GM12878 (cell line): ENCODE measurements at regions of chr18 and their contacts with region 1.

Region 1: GRCh38 chr18:34122724-34123334 is 101.9 kb downstream of the NOL4 start:
- DNase-seq: peak; percentile 17
- ATAC-seq: peak; percentile 81
- H3K4me3 ChIP-seq: no peak overlapping the region
- H3K27ac ChIP-seq: no peak overlapping the region
- H3K4me1 ChIP-seq: no peaks in the 10 kb centered on the region
- H3K27me3 ChIP-seq: no peaks in the 10 kb centered on the region
- CTCF ChIP-seq: peak; percentile 80 to 99 (median 91); a peak in 5 of 6 replicates
- EP300 ChIP-seq: no peak
- POLR2A ChIP-seq: no peak
- RAD21 ChIP-seq: peak; percentile 98

Region 2: DNA sequence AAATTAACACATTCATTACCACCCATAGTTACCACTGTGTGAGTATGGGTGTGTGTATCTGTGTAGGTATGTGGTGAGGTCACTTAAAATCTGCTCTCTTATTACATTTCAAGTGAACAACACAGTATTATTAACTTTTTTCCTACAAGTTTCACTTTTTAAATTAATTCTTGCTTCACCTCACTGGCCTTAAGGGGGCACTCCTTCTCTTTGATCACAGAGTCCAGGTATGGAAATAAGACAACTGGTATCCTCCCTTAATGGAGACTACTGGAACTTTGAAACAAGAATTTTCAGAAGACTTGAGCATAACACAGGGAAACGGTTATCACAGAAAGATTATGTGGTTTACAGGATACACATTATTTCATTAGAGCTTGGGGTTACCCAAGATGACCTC is 289.0 kb before region 1 on chr18:
- CTCF ChIA-PET with region 1: interaction called, 79 read pairs
- POLR2A ChIA-PET with region 1: no interaction called
- RAD21 ChIA-PET with region 1: interaction called, 74 read pairs
- SMC1A ChIA-PET with region 1: interaction called, 83 read pairs
- in situ Hi-C with region 1: no loop called
- intact Hi-C with region 1: loop called (anchors 2 kb)
- DNase-seq: no peak
- ATAC-seq: peak; percentile 68
- H3K4me3 ChIP-seq: no peak overlapping the region
- H3K27ac ChIP-seq: no peak overlapping the region
- H3K4me1 ChIP-seq: no peaks in the 10 kb centered on the region
- H3K27me3 ChIP-seq: no peaks in the 10 kb centered on the region
- CTCF ChIP-seq: no peak; a peak in 1 of 6 replicates
- EP300 ChIP-seq: no peak
- POLR2A ChIP-seq: no peak
- RAD21 ChIP-seq: peak; percentile 41

Region 3: DNA sequence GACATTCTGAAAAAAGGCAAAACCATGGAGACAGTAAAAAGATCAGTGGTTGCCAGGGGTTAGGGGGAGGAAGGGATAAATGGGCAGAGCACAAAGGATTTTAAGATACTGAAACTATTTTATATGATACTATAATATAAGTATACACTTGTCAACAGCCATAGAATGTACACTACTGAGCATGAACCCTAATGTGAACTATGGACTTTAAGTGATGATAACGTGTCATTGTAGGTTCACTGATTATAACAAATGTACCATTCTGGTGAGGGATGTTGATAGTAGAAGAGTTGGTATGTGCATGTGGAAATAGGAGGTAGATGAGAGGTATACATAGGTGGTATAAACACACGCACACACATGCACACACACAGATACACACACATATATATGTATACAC is 139.7 kb before region 1 on chr18:
- CTCF ChIA-PET with region 1: no interaction called
- POLR2A ChIA-PET with region 1: no interaction called
- RAD21 ChIA-PET with region 1: no interaction called
- SMC1A ChIA-PET with region 1: no interaction called
- in situ Hi-C with region 1: no loop called
- intact Hi-C with region 1: no loop called
- DNase-seq: no peak
- ATAC-seq: no peak
- H3K4me3 ChIP-seq: no peak overlapping the region
- H3K27ac ChIP-seq: no peak overlapping the region
- H3K4me1 ChIP-seq: no peaks in the 10 kb centered on the region
- H3K27me3 ChIP-seq: no peaks in the 10 kb centered on the region
- CTCF ChIP-seq: no peak
- EP300 ChIP-seq: no peak
- POLR2A ChIP-seq: no peak
- RAD21 ChIP-seq: no peak

Region 4: DNA sequence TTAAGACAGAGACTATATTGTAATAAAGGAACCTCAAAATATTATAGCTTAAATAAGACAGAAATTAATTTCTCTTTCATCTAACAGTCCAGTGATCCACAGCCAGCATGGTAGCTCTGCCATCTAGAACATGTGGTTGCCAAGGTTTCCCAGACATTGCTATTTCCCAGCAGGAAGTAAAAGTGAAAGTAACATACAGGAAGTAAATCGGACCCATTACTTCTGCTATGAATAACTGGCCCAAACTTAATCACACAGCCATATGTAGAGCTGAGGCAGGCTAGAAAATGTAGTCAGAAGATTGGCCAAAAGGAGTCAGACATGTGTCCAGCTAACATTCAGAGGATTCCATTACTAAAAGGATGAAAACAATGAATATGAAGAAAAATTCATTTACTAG is 30.9 kb after region 1 on chr18:
- CTCF ChIA-PET with region 1: interaction called, 43 read pairs
- POLR2A ChIA-PET with region 1: interaction called, 6 read pairs
- RAD21 ChIA-PET with region 1: interaction called, 30 read pairs
- SMC1A ChIA-PET with region 1: interaction called, 18 read pairs
- in situ Hi-C with region 1: no loop called
- intact Hi-C with region 1: no loop called
- DNase-seq: peak; percentile 13
- ATAC-seq: peak; percentile 85
- H3K4me3 ChIP-seq: no peak overlapping the region
- H3K27ac ChIP-seq: no peak overlapping the region
- H3K4me1 ChIP-seq: no peaks in the 10 kb centered on the region
- H3K27me3 ChIP-seq: no peaks in the 10 kb centered on the region
- CTCF ChIP-seq: no peak
- EP300 ChIP-seq: 0 out of 4 replicates have a peak, but pooled peaks of 1 of the 2 experiments have one; percentile 12
- POLR2A ChIP-seq: no peak
- RAD21 ChIP-seq: no peak

Region 5: DNA sequence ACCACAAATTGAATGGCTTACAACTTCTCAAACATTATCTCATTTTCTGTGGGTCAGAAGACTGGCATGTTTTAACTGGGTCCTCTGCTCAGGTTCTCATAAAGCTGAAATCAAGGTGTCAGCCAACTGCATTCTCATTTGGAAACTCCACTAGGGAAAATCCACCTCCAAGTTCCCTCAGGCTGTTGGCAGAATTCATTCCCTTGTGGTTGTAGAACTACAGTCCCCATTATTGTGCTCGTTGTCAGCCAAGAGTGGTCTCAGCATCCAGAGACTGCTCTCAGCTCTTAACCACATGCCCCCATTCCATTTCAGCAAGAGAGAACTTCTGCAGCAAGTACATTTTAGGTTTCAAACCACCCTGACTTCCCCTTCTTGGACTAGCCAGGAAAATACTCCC is 89.7 kb after region 1 on chr18:
- CTCF ChIA-PET with region 1: interaction called, 4 read pairs
- POLR2A ChIA-PET with region 1: no interaction called
- RAD21 ChIA-PET with region 1: interaction called, 47 read pairs
- SMC1A ChIA-PET with region 1: interaction called, 8 read pairs
- in situ Hi-C with region 1: no loop called
- intact Hi-C with region 1: no loop called
- DNase-seq: no peak
- ATAC-seq: peak; percentile 51
- H3K4me3 ChIP-seq: no peak overlapping the region
- H3K27ac ChIP-seq: no peak overlapping the region
- H3K4me1 ChIP-seq: no peaks in the 10 kb centered on the region
- H3K27me3 ChIP-seq: no peaks in the 10 kb centered on the region
- CTCF ChIP-seq: no peak
- EP300 ChIP-seq: no peak
- POLR2A ChIP-seq: no peak
- RAD21 ChIP-seq: no peak

Region 6: GRCh38 chr18:34297287-34297686 is 174.5 kb after region 1 on chr18:
- CTCF ChIA-PET with region 1: interaction called, 10 read pairs
- POLR2A ChIA-PET with region 1: no interaction called
- RAD21 ChIA-PET with region 1: interaction called, 17 read pairs
- SMC1A ChIA-PET with region 1: interaction called, 19 read pairs
- in situ Hi-C with region 1: no loop called
- intact Hi-C with region 1: no loop called
- DNase-seq: no peak
- ATAC-seq: peak; percentile 18; the same call in 1 of the 3 replicates
- H3K4me3 ChIP-seq: no peak overlapping the region
- H3K27ac ChIP-seq: no peak overlapping the region
- H3K4me1 ChIP-seq: no peaks in the 10 kb centered on the region
- H3K27me3 ChIP-seq: no peaks in the 10 kb centered on the region
- CTCF ChIP-seq: no peak
- EP300 ChIP-seq: no peak
- POLR2A ChIP-seq: no peak
- RAD21 ChIP-seq: no peak

Region 7: GRCh38 chr18:34444622-34445021 is 321.8 kb after region 1 on chr18:
- CTCF ChIA-PET with region 1: interaction called, 15 read pairs
- POLR2A ChIA-PET with region 1: no interaction called
- RAD21 ChIA-PET with region 1: interaction called, 17 read pairs
- SMC1A ChIA-PET with region 1: interaction called, 18 read pairs
- in situ Hi-C with region 1: no loop called
- intact Hi-C with region 1: loop called (anchors 5 kb)
- DNase-seq: no peak
- ATAC-seq: no peak
- H3K4me3 ChIP-seq: no peak overlapping the region
- H3K27ac ChIP-seq: no peak overlapping the region
- H3K4me1 ChIP-seq: no peaks in the 10 kb centered on the region
- H3K27me3 ChIP-seq: no peaks in the 10 kb centered on the region
- CTCF ChIP-seq: no peak
- EP300 ChIP-seq: no peak
- POLR2A ChIP-seq: no peak
- RAD21 ChIP-seq: no peak

Region 8: GRCh38 chr18:34661464-34662111 is 538.8 kb after region 1 on chr18:
- CTCF ChIA-PET with region 1: interaction called, 45 read pairs
- POLR2A ChIA-PET with region 1: no interaction called
- RAD21 ChIA-PET with region 1: interaction called, 38 read pairs
- SMC1A ChIA-PET with region 1: interaction called, 32 read pairs
- in situ Hi-C with region 1: no loop called
- intact Hi-C with region 1: loop called (anchors 5 kb)
- DNase-seq: no peak
- ATAC-seq: peak; percentile 90
- H3K4me3 ChIP-seq: no peak overlapping the region
- H3K27ac ChIP-seq: no peak overlapping the region
- H3K4me1 ChIP-seq: no peaks in the 10 kb centered on the region
- H3K27me3 ChIP-seq: no peaks in the 10 kb centered on the region; a peak in 1 of 4 replicates
- CTCF ChIP-seq: peak; percentile 69 to 76 (median 75)
- EP300 ChIP-seq: no peak
- POLR2A ChIP-seq: no peak
- RAD21 ChIP-seq: peak; percentile 56

Region 9: GRCh38 chr18:34942975-34943374 is 820.1 kb after region 1 on chr18:
- CTCF ChIA-PET with region 1: no interaction called
- POLR2A ChIA-PET with region 1: no interaction called
- RAD21 ChIA-PET with region 1: no interaction called
- SMC1A ChIA-PET with region 1: no interaction called
- in situ Hi-C with region 1: no loop called
- intact Hi-C with region 1: no loop called
- DNase-seq: no peak
- ATAC-seq: no peak
- H3K4me3 ChIP-seq: no peak overlapping the region
- H3K27ac ChIP-seq: no peak overlapping the region
- H3K4me1 ChIP-seq: no peaks in the 10 kb centered on the region
- H3K27me3 ChIP-seq: no peaks in the 10 kb centered on the region
- CTCF ChIP-seq: no peak
- EP300 ChIP-seq: no peak
- POLR2A ChIP-seq: no peak
- RAD21 ChIP-seq: no peak